T-cell (primary cell): ENCODE measurements at regions of chr5 and their contacts with region 1.

Region 1: GRCh38 chr5:159133041-159133741 is 33.5 kb upstream of the EBF1 start:
- DNase-seq: peak in 2 of 35 experiments; percentile 10 to 65
- ATAC-seq: peak in 3 of 4 experiments; percentile 30 to 35 (median 32)
- H3K4me3 ChIP-seq: no peak overlapping the region
- H3K4me3 Mint-ChIP-seq: no peak overlapping the region
- H3K27ac ChIP-seq: no peak overlapping the region
- H3K27ac Mint-ChIP-seq: no peak overlapping the region
- H3K4me1 ChIP-seq: no peaks in the 10 kb centered on the region
- H3K4me1 Mint-ChIP-seq: no peaks in the 10 kb centered on the region
- H3K27me3 ChIP-seq: no peaks in the 10 kb centered on the region
- H3K27me3 Mint-ChIP-seq: peaks cover 7 to 13% of the 10 kb centered on the region in 2 donors

Region 2: GRCh38 chr5:158074992-158075769 is 1058.0 kb before region 1 on chr5:
- CTCF ChIA-PET with region 1: interaction called, 13 to 19 read pairs
- POLR2A ChIA-PET with region 1: no interaction called
- DNase-seq: peak; percentile 1 to 64 (median 26)
- ATAC-seq: peak; percentile 55 to 75 (median 66)
- H3K4me3 ChIP-seq: no peak overlapping the region
- H3K4me3 Mint-ChIP-seq: no peak overlapping the region
- H3K27ac ChIP-seq: no peak overlapping the region
- H3K27ac Mint-ChIP-seq: no peak overlapping the region
- H3K4me1 ChIP-seq: no peaks in the 10 kb centered on the region
- H3K4me1 Mint-ChIP-seq: peaks cover 0 to 6% (median 5%) of the 10 kb centered on the region in 3 donors
- H3K27me3 ChIP-seq: no peaks in the 10 kb centered on the region
- H3K27me3 Mint-ChIP-seq: peaks cover 3 to 18% of the 10 kb centered on the region in 2 donors

Region 3: DNA sequence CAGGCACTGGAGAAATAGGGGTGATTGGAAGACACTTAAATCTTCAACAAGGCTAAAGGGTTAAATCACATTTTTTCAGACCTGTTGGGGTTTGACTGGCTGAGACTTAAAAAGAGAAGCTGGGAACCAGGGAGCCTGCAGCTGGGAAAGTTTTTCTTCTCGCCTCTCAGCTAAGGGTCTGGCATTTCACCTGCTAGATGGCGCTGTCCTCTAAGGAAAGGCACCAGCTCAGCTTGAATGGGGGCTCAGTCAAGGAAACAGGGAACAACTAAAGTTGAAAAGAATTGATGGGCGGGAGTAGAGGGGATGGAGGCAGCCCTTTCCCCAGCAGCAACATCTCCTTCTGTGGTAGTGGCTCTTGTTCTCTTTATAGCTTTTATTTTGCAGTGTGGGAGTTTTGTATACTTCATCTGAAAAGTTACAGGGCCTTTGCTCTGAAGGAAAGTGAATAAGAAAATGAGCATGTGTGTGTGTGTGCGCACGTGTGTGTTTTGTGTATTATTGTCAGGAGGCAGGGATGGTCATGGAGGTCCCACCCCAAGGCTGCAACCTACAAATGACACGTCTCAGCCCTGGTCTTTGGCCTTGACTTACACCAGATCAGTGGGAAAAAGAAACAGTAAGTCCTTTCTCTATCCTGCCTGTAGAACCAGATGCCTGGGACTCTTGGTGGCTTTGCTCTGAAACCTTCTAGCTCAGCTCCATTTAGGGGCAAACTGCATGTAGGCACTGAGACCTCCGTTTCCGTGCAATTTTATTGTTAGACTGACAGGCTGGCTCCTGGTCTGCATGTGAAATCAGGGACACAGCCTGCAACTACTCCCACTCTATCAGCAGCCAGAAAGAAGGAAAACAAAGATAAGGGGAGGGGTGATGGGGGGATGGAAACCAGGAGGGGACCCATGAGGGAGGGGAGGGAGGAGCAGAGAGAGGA is 958.0 kb before region 1 on chr5:
- CTCF ChIA-PET with region 1: interaction called, 4 to 14 read pairs
- POLR2A ChIA-PET with region 1: no interaction called
- DNase-seq: peak in 30 of 35 experiments; percentile 2 to 67 (median 33)
- ATAC-seq: peak; percentile 40 to 70 (median 50)
- H3K4me3 ChIP-seq: no peak overlapping the region
- H3K4me3 Mint-ChIP-seq: no peak overlapping the region
- H3K27ac ChIP-seq: no peak overlapping the region
- H3K27ac Mint-ChIP-seq: no peak overlapping the region
- H3K4me1 ChIP-seq: no peaks in the 10 kb centered on the region
- H3K4me1 Mint-ChIP-seq: no peaks in the 10 kb centered on the region
- H3K27me3 ChIP-seq: no peaks in the 10 kb centered on the region
- H3K27me3 Mint-ChIP-seq: peaks cover 0 to 8% of the 10 kb centered on the region in 2 donors